Activated naive CD4-positive, alpha-beta T cell treated with anti-CD3 and anti-CD28 coated beads for 36 hours (primary cell): ENCODE measurements at regions of chrX and their contacts with region 1.

Region 1: DNA sequence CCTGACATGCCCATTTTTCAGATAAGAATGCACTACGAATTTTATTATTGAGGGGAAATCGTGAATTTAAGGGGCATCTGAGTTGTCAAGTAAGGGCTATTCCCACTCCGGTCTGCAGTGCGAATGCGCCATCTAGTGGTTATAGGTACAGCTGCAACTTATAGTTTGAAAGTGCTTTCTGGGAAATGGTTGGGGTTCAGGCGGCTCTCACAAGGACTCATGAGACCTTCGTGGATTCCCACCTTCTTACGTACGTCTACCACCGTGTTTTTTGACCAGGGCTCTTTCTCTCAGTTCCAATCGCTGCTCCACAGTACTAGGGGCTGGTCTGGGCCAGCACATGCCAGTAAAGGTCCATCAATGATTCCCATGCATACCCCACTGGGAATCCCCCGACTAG is 12.3 kb downstream of the MSL3 start:
- DNase-seq: peak; percentile 64
- H3K4me3 Mint-ChIP-seq: peak overlapping the region; percentile 47
- H3K27ac Mint-ChIP-seq: peak overlapping the region; percentile 92
- H3K4me1 Mint-ChIP-seq: peaks cover 41% of the 10 kb centered on the region
- H3K27me3 Mint-ChIP-seq: no peaks in the 10 kb centered on the region

Region 2: DNA sequence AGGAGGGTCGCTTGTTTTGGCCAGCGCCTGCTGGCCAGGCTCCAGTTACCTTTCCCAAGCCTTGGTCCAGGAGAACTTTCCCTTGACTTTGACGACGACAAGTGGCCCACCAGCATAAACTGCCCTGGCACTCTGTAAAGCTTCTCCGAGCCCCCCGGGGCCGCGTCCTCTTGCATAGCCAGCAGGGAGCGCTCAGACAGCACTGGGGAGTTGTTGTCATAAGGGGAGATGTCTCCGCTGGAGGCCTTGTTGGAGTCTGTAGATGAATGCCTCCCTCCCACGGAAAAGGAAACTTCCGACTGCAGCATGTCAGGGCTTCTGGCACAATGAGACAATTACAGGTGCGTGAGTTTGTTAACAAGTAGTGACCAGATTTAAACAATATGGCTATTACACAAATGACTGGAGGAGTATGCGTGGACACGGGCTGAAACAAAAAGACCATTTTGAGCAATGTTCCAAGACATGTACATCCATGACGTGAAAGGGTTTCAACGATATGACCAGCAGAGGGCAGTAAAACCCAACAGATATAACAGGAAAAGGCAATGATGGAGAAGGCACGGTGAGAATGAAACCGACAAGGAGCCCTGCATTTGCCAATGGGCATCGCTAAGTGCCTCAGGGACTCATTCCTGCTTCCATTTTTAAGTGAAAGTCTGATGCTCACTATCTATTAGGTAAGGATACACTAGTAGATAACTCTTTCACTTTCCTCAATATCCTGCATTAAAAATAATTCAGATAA is 626.2 kb before region 1 on chrX:
- CTCF ChIA-PET with region 1: no interaction called
- intact Hi-C with region 1: loop called (anchors 5 kb)
- DNase-seq: peak; percentile 66
- H3K4me3 Mint-ChIP-seq: no peak overlapping the region
- H3K27ac Mint-ChIP-seq: no peak overlapping the region
- H3K4me1 Mint-ChIP-seq: peaks cover 2% of the 10 kb centered on the region
- H3K27me3 Mint-ChIP-seq: peaks cover 5% of the 10 kb centered on the region

Region 3: GRCh38 chrX:11758400-11759171 is 11.7 kb before region 1 on chrX:
- CTCF ChIA-PET with region 1: interaction called, 10 read pairs
- intact Hi-C with region 1: loop called (anchors 1 kb)
- DNase-seq: peak; percentile 89
- H3K4me3 Mint-ChIP-seq: peak overlapping the region; percentile 94
- H3K27ac Mint-ChIP-seq: peak overlapping the region; percentile 100
- H3K4me1 Mint-ChIP-seq: peaks cover 20% of the 10 kb centered on the region
- H3K27me3 Mint-ChIP-seq: no peaks in the 10 kb centered on the region

Region 4: GRCh38 chrX:12701628-12702027 is 931.3 kb after region 1 on chrX:
- CTCF ChIA-PET with region 1: no interaction called
- intact Hi-C with region 1: loop called (anchors 10 kb)
- DNase-seq: peak; percentile 58
- H3K4me3 Mint-ChIP-seq: no peak overlapping the region
- H3K27ac Mint-ChIP-seq: no peak overlapping the region
- H3K4me1 Mint-ChIP-seq: peaks cover 2% of the 10 kb centered on the region
- H3K27me3 Mint-ChIP-seq: no peaks in the 10 kb centered on the region

Region 5: GRCh38 chrX:12894074-12895030 is 1124.0 kb after region 1 on chrX:
- CTCF ChIA-PET with region 1: no interaction called
- intact Hi-C with region 1: loop called (anchors 5 kb)
- DNase-seq: peak; percentile 59
- H3K4me3 Mint-ChIP-seq: no peak overlapping the region
- H3K27ac Mint-ChIP-seq: no peak overlapping the region
- H3K4me1 Mint-ChIP-seq: peaks cover 31% of the 10 kb centered on the region
- H3K27me3 Mint-ChIP-seq: no peaks in the 10 kb centered on the region